HepG2 (cell line): ENCODE measurements at regions of chr20 and their contacts with region 1.

Region 1: DNA sequence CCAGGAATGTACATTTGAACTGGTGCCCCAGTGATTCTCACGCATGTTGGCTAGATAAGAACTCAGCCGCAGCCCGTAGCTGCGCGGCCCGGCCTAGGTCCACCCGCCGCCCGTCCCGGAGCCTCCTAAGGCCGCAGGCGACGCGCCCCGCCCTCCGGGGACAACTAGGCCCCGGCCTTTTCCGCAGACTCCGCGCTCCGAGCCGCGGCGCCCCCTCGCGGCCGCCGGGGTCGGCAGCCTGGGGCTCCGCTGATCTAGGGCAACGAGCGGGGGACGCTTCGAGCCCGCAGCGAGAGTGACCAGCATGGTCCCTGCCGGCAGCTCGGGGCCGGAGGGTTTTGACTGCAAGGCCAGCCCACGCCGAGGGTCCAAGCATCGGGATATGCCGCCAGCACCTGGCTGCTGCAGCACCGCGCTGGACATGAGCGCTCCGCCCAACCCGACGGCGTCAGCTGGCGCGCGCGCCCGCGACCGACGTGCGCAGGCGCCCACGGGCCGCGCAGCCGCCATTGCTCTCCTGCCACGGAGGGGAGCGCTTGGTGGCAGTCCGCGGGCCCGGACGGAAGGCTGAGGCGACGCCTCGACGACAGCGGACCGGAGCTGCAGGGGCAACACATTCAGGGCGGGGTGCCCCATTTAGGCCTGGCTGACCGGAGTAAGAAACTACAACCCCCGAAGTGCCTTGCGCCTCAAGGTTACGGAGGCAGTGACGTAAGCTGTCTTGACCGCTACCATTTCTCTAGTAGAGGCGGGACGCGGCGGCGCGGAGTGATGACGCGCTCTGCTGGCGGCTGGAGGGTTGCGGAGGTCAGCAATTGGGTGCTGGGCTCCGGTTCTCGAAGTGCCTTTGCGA is at the start of gene AP5S1:
- DNase-seq: peak; percentile 97
- ATAC-seq: peak; percentile 77
- H3K4me3 ChIP-seq: peak within 1 kb of the TSS; percentile 91 to 95 (median 94)
- H3K27ac ChIP-seq: peak within 1 kb of the TSS; percentile 96
- H3K4me1 ChIP-seq: peaks cover 32% of the 10 kb centered on the region
- H3K27me3 ChIP-seq: peaks cover 1 to 10% of the 10 kb centered on the region in 2 experiments; a peak in 2 of 5 replicates
- CTCF ChIP-seq: peak; percentile 97
- EP300 ChIP-seq: peak in 1 of 2 experiments; percentile 54; a peak in 2 of 4 replicates
- POLR2A ChIP-seq: peak; percentile 97
- RAD21 ChIP-seq: peak; percentile 100
- total RNA-seq, gene AP5S1: 23.2 and 23.7 TPM in 2 replicates

Region 2: DNA sequence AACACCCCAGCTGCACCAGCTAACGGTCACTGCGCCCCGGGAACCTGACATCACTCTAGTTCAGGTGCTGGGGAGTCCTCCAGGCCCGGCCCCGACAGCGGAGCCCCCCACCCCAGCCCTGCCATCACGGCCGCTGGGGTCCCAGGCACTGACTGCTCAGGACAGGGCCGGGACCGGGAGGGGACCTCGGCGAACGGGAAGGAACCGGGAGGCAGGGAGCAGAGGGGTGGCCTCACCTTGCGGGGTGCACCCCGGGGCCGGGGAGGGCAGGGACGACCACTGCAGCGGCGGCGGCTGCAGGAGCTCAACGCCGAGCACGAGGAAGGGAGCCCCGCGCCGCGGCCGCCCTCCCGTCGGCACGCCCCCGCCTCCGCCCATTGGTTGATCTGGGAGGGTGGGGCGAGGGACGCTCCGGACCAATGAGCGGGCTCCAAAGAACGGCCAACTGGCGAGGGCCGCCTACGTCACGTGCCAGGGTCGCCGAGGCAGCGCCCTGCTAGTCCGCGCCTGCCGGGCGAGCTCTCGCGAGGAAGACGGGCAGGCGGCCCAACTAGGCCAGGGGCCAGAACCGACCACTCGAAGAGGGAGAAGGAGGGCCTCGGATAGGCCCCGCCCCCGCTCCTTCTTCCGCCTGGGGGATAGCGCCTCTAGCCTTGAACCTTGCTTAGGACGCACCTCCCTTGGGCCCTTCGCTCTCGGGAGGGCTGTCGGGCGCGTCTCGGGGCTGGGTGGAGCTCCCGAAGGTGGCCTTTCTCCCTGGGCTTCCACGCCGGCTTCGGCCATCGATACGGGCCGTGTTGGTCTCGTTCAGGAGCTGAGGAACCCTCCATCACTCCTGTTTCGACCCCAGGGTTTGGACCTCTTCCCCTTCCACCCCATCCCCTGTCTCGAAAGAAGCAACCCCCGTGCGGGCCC is 52.6 kb before region 1 on chr20 and contains the start of gene ADISSP:
- CTCF ChIA-PET with region 1: interaction called, 3 read pairs
- POLR2A ChIA-PET with region 1: interaction called, 51 read pairs
- in situ Hi-C with region 1: no loop called
- intact Hi-C with region 1: no loop called
- DNase-seq: peak; percentile 99
- ATAC-seq: peak; percentile 92
- H3K4me3 ChIP-seq: peak within 1 kb of the TSS; percentile 72 to 93 (median 89)
- H3K27ac ChIP-seq: peak within 1 kb of the TSS; percentile 75
- H3K4me1 ChIP-seq: peaks cover 74% of the 10 kb centered on the region
- H3K27me3 ChIP-seq: no peaks in the 10 kb centered on the region
- CTCF ChIP-seq: peak; percentile 74
- EP300 ChIP-seq: 0 out of 4 replicates have a peak, but pooled peaks of 1 of the 2 experiments have one; percentile 10
- POLR2A ChIP-seq: peak; percentile 82 to 97
- RAD21 ChIP-seq: peak; percentile 23
- total RNA-seq, gene ADISSP: 70.0 and 90.6 TPM in 2 replicates

Region 3: DNA sequence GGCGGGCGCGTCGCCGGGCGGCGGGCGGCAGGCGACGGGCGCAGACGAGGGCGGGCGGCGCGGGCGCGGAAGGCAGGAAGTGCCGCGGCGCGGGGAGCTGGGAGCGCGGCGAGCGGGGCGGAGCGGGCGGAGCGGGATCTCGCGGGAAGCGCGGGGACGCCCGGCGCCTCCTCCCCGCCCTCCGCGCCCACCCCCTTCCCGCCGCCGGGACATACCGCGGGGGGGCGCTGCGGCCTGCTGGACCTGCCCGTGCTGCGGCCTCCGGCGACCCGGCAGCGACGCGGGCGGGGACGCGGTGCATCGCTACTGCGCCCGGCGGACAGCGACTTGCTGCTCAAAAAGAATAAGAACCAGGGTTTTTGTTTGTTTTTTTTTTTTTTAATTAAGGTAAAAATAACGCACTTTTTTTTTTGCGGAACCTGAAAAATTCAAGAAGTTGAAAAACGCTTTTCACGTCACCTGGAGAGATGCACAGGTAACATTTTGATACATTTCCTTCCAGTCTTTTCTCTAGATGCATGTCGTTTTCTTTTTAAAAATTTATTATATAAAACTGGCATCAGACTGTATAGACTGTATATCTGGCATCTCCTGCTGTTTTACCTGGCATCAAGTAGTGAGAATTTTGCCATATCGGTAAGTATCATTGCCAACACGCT is 33.5 kb before region 1 on chr20 and contains the start of gene CENPB:
- CTCF ChIA-PET with region 1: interaction called, 119 read pairs
- POLR2A ChIA-PET with region 1: interaction called, 134 read pairs
- in situ Hi-C with region 1: loop called (anchors 5 kb)
- intact Hi-C with region 1: loop called (anchors 1 kb)
- DNase-seq: peak; percentile 83
- ATAC-seq: peak; percentile 83
- H3K4me3 ChIP-seq: peak within 1 kb of the TSS; percentile 57 to 82 (median 82)
- H3K27ac ChIP-seq: peak within 1 kb of the TSS; percentile 34
- H3K4me1 ChIP-seq: peaks cover 79% of the 10 kb centered on the region
- H3K27me3 ChIP-seq: peaks cover 0 to 18% of the 10 kb centered on the region in 2 experiments; a peak in 3 of 5 replicates
- CTCF ChIP-seq: peak; percentile 83
- EP300 ChIP-seq: no peak
- POLR2A ChIP-seq: peak in 1 of 2 experiments; percentile 69; a peak in 1 of 4 replicates
- RAD21 ChIP-seq: peak; percentile 97
- total RNA-seq, gene CENPB: 42.9 and 54.5 TPM in 2 replicates

Region 4: DNA sequence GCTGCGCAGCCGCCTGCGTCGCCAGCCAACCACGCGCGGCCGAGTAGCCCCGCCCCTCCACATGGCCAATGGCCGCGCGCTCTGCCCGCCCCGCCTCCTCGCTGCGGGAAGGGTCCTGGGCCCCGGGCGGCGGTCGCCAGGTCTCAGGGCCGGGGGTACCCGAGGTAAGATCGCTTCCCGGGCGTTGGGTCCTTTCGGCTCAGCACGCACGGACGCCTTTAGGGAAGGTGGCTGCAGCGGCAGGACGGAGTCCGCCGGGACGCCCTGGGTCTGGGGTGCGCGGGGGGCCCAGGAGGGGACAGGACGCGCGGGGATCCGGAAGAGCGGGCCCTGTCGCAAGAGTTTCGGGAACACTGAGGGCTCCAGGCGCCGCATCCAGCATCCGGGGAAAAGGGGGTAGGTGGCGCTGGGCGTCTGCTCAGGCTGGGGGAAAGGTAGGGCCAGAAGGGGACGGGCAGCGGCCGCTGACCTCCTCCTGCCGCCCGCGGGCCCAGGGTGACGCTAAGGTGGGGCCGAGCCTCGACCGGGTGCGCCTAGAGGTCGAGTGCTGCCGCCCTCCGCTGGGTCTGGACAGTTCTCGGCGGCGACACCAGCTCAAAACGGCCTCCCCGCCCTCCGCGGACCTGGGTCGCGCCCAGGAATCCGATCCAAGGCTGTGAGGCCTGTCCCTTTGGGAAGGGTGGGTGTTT is 26.6 kb after region 1 on chr20 and contains the start of gene MAVS:
- CTCF ChIA-PET with region 1: no interaction called
- POLR2A ChIA-PET with region 1: interaction called, 17 read pairs
- in situ Hi-C with region 1: no loop called
- intact Hi-C with region 1: loop called (anchors 1 kb)
- DNase-seq: peak; percentile 90
- ATAC-seq: peak; percentile 96
- H3K4me3 ChIP-seq: peak within 1 kb of the TSS; percentile 78 to 97 (median 96)
- H3K27ac ChIP-seq: peak within 1 kb of the TSS; percentile 91
- H3K4me1 ChIP-seq: peaks cover 50% of the 10 kb centered on the region
- H3K27me3 ChIP-seq: no peaks in the 10 kb centered on the region; a peak in 1 of 5 replicates
- CTCF ChIP-seq: peak; percentile 68
- EP300 ChIP-seq: peak in 1 of 2 experiments; percentile 10; a peak in 1 of 4 replicates
- POLR2A ChIP-seq: peak; percentile 96 to 98
- RAD21 ChIP-seq: peak; percentile 63; the same call in 1 of the 2 replicates
- total RNA-seq, gene MAVS: 36.6 and 44.4 TPM in 2 replicates

Region 5: DNA sequence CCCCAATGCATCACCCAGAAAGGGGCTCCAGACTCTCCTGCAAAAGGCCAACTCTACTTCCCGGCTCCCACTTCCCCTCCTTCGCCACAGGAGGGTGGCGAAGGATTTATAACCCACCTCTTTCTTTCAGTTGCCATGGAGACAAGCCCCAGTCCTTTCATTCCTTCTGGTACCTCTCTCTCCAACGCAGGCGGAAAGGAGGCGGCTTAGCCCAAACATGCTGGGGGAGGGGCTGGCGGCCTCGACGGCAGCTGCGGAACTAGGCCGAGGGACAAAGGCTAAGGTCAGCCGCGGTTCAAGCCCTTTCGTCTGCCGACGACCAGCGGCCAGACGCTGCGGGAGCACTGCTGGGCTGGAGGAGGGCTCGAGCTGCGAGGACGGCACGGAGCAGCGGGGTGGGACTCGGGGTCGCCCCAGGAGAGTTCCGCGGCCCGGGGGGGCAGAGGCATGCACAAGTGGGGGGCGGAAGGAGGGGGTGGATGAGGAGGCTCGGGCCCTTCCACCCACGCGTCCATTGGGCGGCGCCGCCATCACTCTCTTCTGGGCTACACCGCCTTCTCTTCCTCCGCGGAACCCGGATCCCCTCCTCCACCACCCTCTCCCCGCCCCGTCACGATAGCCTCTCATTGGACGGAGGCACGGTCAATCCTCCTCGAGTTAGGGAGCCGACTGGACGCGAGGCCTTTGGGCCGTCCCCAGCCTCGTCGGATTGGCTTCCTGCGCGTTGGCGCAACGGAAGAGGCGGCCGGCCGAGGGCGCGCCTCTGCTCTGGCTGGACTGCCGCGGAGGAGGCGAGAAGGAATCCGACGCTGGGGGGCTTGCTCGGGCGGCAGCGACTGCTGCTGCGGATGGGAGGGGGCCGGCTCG is 68.6 kb after region 1 on chr20 and contains the start of gene PANK2:
- CTCF ChIA-PET with region 1: no interaction called
- POLR2A ChIA-PET with region 1: interaction called, 4 read pairs
- in situ Hi-C with region 1: no loop called
- intact Hi-C with region 1: loop called (anchors 2 kb)
- DNase-seq: peak; percentile 99
- ATAC-seq: peak; percentile 97
- H3K4me3 ChIP-seq: peak within 1 kb of the TSS; percentile 86 to 94 (median 94)
- H3K27ac ChIP-seq: peak within 1 kb of the TSS; percentile 86
- H3K4me1 ChIP-seq: peaks cover 46% of the 10 kb centered on the region
- H3K27me3 ChIP-seq: no peaks in the 10 kb centered on the region; a peak in 1 of 5 replicates
- CTCF ChIP-seq: peak; percentile 65
- EP300 ChIP-seq: peak in 1 of 2 experiments; percentile 42; a peak in 1 of 4 replicates
- POLR2A ChIP-seq: peak; percentile 88 to 89
- RAD21 ChIP-seq: peak; percentile 78
- total RNA-seq, gene PANK2: 123 and 127 TPM in 2 replicates